Activated naive CD8-positive, alpha-beta T cell treated with anti-CD3 and anti-CD28 coated beads, Interleukin-2, amount 10 ng/mL, durations not matched to agents 7 days and 5 days (primary cell): ENCODE measurements at regions of chr12 and their contacts with region 1.

Region 1: GRCh38 chr12:28190321-28191050 is at the start of gene CCDC91:
- DNase-seq: peak; percentile 87
- ATAC-seq: peak; percentile 85
- H3K4me3 Mint-ChIP-seq: peak within 1 kb of the TSS; percentile 94
- H3K27ac Mint-ChIP-seq: peak within 1 kb of the TSS; percentile 99
- H3K4me1 Mint-ChIP-seq: peaks cover 32% of the 10 kb centered on the region
- H3K27me3 Mint-ChIP-seq: no peaks in the 10 kb centered on the region
- total RNA-seq, gene CCDC91: 33.2 to 33.9 TPM

Region 2: DNA sequence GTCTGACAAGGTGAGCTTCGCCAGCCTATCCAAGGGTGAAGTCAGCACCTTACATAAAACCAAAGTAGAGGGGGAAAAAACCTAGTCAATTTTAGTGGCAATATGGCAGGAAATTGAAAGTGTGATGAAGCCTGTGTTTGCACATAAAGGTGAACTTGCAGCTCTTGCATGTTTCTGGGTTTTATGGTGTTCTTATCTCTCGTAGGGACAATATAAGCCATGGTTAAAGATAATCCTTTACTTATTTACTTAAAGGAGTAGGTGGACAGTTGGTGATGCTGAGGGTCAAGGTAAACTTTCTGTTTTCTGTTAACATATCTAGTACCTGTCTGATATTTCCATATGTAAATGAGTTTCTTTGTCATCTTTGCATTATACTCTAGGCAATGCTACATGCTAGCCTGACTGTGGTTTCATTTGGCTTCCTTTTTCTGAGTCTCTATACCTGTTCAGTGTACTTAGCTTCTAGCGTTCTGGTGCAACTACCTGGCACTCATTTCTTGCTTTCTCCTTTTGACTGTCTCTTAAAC is 32.6 kb after region 1 on chr12:
- POLR2A ChIA-PET with region 1: interaction called, 11 read pairs
- DNase-seq: no peak
- ATAC-seq: peak; percentile 80
- H3K4me3 Mint-ChIP-seq: peak overlapping the region; percentile 69
- H3K27ac Mint-ChIP-seq: peak overlapping the region; percentile 54
- H3K4me1 Mint-ChIP-seq: peaks cover 32% of the 10 kb centered on the region
- H3K27me3 Mint-ChIP-seq: no peaks in the 10 kb centered on the region

Region 3: GRCh38 chr12:28308891-28309290 is 118.4 kb after region 1 on chr12:
- POLR2A ChIA-PET with region 1: no interaction called
- DNase-seq: no peak
- ATAC-seq: no peak
- H3K4me3 Mint-ChIP-seq: no peak overlapping the region
- H3K27ac Mint-ChIP-seq: no peak overlapping the region
- H3K4me1 Mint-ChIP-seq: peaks cover 4% of the 10 kb centered on the region
- H3K27me3 Mint-ChIP-seq: no peaks in the 10 kb centered on the region